ENCODE measurements at regions of chr9 and their contacts with region 1.

Region 1: DNA sequence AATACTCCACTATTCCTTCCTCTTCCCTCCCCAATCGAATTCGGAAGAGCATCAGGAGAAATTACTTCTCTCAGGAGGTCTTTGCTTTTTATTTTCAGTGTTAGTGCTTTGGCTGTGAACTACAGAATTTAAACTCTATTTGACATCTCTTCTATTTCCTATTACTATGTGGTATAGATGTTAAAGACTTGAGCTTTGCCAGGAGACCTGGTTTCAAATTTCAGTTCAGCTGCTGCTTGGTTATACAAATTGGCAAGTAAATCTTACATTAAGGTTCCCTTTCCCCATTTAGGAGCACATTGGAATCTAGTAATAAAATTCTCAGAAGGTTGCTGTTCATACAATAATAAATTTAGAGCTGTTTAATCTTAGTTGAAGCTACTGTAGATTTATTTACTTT is 13.1 kb downstream of the UHRF2 start:
- DNase-seq: no peak
- H3K4me3 ChIP-seq: no peak overlapping the region
- H3K27ac ChIP-seq: no peak overlapping the region
- H3K4me1 ChIP-seq: peaks cover 13% of the 10 kb centered on the region
- H3K27me3 ChIP-seq: no peaks in the 10 kb centered on the region
- CTCF ChIP-seq: no peak

Region 2: DNA sequence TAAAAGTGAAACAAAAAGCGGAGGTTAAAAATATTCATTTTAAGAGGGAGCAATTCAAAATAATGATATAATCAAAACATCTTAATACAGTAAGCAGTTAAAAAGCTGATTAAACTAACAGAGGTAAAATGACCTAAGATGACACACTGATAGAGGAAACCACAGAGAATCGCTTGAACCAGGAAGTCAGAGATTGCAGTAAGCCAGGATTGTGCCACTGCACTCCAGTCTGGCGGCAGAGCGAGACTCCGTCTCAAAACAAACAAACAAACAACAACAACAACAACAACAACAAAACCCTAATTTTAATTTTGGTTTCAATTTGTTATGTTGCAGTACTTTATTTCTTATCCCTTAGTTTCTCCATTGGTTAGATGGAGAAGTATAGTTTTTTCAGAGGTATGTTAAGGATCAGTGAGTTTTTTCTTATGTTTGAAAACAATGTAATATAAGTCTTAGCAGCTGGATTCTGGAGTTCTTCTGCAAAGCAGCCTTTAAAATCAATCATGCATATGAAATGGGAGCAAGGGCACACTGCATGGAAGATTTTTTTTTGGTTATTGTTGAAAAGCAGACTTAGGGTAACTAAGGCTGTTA is 476.9 kb before region 1 on chr9:
- CTCF ChIA-PET with region 1: no interaction called
- POLR2A ChIA-PET with region 1: interaction called, 10 read pairs
- intact Hi-C with region 1: no loop called
- DNase-seq: peak; percentile 30
- H3K4me3 ChIP-seq: peak overlapping the region; percentile 20
- H3K27ac ChIP-seq: no peak overlapping the region
- H3K4me1 ChIP-seq: peaks cover 13% of the 10 kb centered on the region
- H3K27me3 ChIP-seq: no peaks in the 10 kb centered on the region
- CTCF ChIP-seq: no peak